ENCODE measurements at regions of chr3 and their contacts with region 1.

Region 1: GRCh38 chr3:49120438-49121131 is at the start of gene USP19:
- DNase-seq: peak; percentile 94
- H3K4me3 Mint-ChIP-seq: peak within 1 kb of the TSS; percentile 91
- H3K27ac Mint-ChIP-seq: peak within 1 kb of the TSS; percentile 94
- H3K4me1 Mint-ChIP-seq: peaks cover 23% of the 10 kb centered on the region
- H3K27me3 Mint-ChIP-seq: no peaks in the 10 kb centered on the region
- total RNA-seq, gene USP19: 63.5 to 72.6 TPM

Region 2: GRCh38 chr3:49007068-49007770 is 113.4 kb before region 1 on chr3 and contains the start of gene WDR6:
- CTCF ChIA-PET with region 1: no interaction called
- POLR2A ChIA-PET with region 1: no interaction called
- DNase-seq: peak; percentile 98
- H3K4me3 Mint-ChIP-seq: peak within 1 kb of the TSS; percentile 99
- H3K27ac Mint-ChIP-seq: peak within 1 kb of the TSS; percentile 100
- H3K4me1 Mint-ChIP-seq: peaks cover 37% of the 10 kb centered on the region
- H3K27me3 Mint-ChIP-seq: no peaks in the 10 kb centered on the region
- total RNA-seq, gene WDR6: 144 to 157 TPM

Region 3: DNA sequence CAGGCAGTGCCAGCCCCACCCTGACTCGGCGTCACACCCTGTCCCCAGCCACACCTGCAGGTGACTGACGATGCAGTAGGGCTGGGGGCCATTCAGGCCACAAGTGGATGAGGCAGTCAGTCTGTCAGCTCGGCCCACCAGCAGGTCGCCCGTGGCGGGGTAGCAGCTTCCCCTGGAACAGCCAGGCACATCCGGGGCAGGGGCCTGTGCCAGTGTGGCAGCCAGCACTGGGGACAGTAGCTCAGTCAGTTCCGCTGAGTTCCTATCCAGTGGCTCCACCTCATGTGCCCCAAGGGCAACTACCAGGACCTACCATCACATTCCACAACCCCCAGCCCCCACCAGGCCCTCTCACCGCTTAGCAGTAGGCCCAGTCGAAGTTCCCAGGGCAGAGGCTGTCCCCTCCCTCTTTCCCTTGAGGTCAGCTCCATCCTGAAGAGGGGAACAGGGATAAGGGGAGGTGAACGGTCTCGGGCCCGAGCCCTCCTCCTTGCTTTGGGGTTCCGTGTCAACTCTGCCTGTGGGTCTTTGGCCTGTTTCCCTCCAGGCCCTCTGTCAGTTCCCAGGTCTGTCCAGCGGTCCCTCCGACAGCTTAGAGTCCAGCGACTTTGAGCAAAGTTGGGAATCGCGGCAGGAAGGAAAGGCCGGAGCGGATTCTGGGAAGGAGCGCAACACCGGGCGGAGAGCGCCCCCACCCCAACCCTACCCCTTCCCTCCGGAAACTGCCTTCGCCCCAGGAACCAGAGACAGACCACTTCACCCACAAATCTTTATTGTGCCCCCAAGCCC is 12.0 kb after region 1 on chr3 and contains the start of gene LAMB2:
- CTCF ChIA-PET with region 1: interaction called, 11 read pairs
- POLR2A ChIA-PET with region 1: no interaction called
- DNase-seq: no peak
- H3K4me3 Mint-ChIP-seq: no peak within 1 kb of the TSS
- H3K27ac Mint-ChIP-seq: no peak within 1 kb of the TSS
- H3K4me1 Mint-ChIP-seq: peaks cover 3% of the 10 kb centered on the region
- H3K27me3 Mint-ChIP-seq: peaks cover 16% of the 10 kb centered on the region
- total RNA-seq, gene LAMB2: not detected

Measured in activated CD4-positive, alpha-beta T cell treated with anti-CD3 and anti-CD28 coated beads, Interleukin-2, amount 10 ng/mL, durations not matched to agents 7 days and 5 days (primary cell).